ENCODE measurements at regions of chr17 and their contacts with region 1.

Region 1: DNA sequence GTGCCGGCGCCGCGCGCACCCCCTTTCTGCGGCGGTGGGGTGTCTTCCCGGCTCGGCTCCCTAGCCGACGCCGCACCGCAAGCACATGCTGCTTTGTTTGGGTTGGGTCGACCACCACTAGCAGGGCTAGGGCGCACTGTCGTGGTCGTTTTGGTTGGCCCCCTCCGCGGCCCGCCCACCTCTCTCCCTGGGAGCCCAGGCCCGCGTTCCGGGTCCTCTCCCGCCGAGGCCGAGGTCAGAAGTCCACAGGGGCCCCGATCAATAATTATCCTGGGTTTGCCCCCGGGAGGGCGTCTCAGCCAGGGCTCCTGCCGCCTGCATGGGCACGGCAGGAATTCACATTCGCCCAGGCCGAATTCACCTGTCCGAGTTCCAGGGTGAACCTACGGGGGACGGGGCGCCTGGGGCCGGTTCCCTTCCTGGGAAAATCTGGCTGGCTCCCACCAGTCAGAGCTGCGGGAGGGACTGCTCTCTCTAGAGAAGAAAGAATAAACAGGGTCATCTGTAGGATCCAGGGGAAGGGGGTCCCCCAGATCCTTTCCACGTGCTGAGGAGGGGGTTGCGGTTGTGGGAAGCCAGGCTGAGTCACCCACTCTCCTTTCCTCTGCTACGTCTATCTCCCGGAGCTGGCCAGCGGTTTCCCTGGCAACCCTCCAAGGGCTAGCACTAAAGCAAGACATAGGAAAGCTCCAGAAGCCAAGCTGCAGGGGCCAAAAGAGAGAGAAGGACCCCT is 584 bp upstream of the STAT5B start:
- DNase-seq: peak; percentile 75
- H3K4me3 Mint-ChIP-seq: peak overlapping the region; percentile 80
- H3K27ac Mint-ChIP-seq: peak overlapping the region; percentile 94
- H3K4me1 Mint-ChIP-seq: peaks cover 41% of the 10 kb centered on the region
- H3K27me3 Mint-ChIP-seq: no peaks in the 10 kb centered on the region

Region 2: DNA sequence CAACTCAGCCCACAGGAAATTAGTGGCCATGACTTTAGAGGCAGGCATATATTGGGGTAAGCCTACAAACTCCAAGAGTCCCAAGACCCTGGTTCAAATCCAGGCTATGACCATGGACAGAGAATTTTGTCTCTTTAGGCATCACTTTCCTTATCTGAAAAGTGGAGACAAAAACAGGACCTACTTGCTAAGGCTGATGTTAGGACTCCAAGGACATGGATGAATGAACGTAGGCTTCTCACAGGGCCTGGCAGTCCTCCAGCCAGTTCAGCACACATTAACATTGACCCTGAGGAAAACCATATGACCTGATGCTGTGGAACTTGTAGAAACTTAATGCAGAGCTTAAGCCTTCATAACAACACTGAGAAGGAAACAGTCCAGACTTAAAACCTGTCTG is 462.6 kb before region 1 on chr17:
- intact Hi-C with region 1: no loop called
- DNase-seq: no peak
- H3K4me3 Mint-ChIP-seq: no peak overlapping the region
- H3K27ac Mint-ChIP-seq: no peak overlapping the region
- H3K4me1 Mint-ChIP-seq: peaks cover 12% of the 10 kb centered on the region
- H3K27me3 Mint-ChIP-seq: peaks cover 21% of the 10 kb centered on the region

Region 3: DNA sequence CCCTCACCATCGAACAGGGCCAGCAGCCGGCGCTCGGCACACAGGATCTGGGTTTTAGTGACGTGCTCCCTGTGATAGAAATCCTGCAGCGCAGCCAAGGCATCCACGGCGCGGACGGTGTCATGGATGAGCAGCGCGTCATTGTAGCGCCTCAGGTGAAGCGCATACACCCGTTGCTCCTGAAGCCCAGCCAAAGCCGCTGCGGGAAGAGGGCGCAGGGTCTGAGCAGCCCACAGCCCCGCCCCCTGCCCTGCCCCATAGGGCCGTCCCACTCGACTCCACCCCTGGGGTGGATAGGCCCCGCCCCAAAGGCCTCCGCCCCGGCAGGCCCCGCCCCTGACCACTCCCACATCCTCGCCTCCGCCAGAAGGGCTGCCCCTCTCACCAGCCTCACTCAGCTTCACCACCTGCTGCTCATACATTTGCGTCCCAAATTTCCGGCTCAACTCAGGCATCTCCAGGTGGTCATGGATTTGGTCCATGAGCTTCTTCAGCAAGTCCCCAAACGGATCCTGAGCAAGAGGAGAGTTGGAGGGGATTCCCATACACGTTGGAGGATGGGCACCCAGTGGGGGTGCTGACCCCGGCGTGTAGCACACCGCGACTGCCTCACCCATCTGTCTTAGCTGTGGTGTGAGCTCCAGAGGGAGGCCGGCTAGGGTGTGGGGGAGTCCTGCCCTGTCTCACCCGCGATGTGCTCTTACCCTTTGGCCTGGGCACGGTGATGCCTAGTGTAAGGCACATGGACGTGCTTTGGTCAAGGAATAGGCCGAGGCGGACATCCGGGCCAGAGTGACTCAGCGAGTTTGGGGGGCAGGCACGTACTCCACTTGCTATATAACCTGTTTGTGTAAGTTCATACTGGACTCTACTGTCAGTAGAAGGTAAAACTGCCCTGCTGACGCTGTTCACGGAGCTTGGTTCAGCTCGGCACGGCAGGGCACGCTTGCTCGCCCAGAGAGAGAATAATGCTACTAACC is 168.9 kb before region 1 on chr17:
- intact Hi-C with region 1: no loop called
- DNase-seq: peak; percentile 98
- H3K4me3 Mint-ChIP-seq: peak overlapping the region; percentile 67
- H3K27ac Mint-ChIP-seq: peak overlapping the region; percentile 58
- H3K4me1 Mint-ChIP-seq: peaks cover 37% of the 10 kb centered on the region
- H3K27me3 Mint-ChIP-seq: no peaks in the 10 kb centered on the region

Region 4: GRCh38 chr17:42221937-42222745 is 54.6 kb before region 1 on chr17:
- intact Hi-C with region 1: loop called (anchors 2 kb)
- DNase-seq: peak; percentile 85
- H3K4me3 Mint-ChIP-seq: no peak overlapping the region
- H3K27ac Mint-ChIP-seq: peak overlapping the region; percentile 27
- H3K4me1 Mint-ChIP-seq: peaks cover 7% of the 10 kb centered on the region
- H3K27me3 Mint-ChIP-seq: no peaks in the 10 kb centered on the region

Region 5: GRCh38 chr17:42248351-42249179 is 28.2 kb before region 1 on chr17:
- intact Hi-C with region 1: loop called (anchors 2 kb)
- DNase-seq: peak; percentile 94
- H3K4me3 Mint-ChIP-seq: peak overlapping the region; percentile 87
- H3K27ac Mint-ChIP-seq: peak overlapping the region; percentile 98
- H3K4me1 Mint-ChIP-seq: peaks cover 58% of the 10 kb centered on the region
- H3K27me3 Mint-ChIP-seq: no peaks in the 10 kb centered on the region

Measured in activated CD4-positive, alpha-beta T cell treated with anti-CD3 and anti-CD28 coated beads, Interleukin-2, amount 10 ng/mL, durations not matched to agents 24 days and 14 days (primary cell).